PC-9 (cell line): ENCODE measurements at regions of chr6 and their contacts with region 1.

Region 1: GRCh38 chr6:28161410-28162079 is 19.9 kb downstream of the ZKSCAN8 start:
- DNase-seq: peak; percentile 70 to 93
- H3K4me3 ChIP-seq: peak overlapping the region; percentile 74
- H3K27ac ChIP-seq: no peak overlapping the region
- H3K4me1 ChIP-seq: peaks cover 6% of the 10 kb centered on the region; the same call in 1 of the 2 replicates
- H3K27me3 ChIP-seq: no peaks in the 10 kb centered on the region
- CTCF ChIP-seq: no peak

Region 2: GRCh38 chr6:28212510-28213212 is 51.1 kb after region 1 on chr6:
- CTCF ChIA-PET with region 1: no interaction called
- POLR2A ChIA-PET with region 1: no interaction called
- intact Hi-C with region 1: loop called (anchors 5 kb)
- DNase-seq: peak; percentile 84 to 93
- H3K4me3 ChIP-seq: peak overlapping the region; percentile 64
- H3K27ac ChIP-seq: peak overlapping the region; percentile 70
- H3K4me1 ChIP-seq: peaks cover 21% of the 10 kb centered on the region
- H3K27me3 ChIP-seq: no peaks in the 10 kb centered on the region
- CTCF ChIP-seq: no peak